MCF 10A (cell line): ENCODE measurements at regions of chr2 and their contacts with region 1.

Region 1: DNA sequence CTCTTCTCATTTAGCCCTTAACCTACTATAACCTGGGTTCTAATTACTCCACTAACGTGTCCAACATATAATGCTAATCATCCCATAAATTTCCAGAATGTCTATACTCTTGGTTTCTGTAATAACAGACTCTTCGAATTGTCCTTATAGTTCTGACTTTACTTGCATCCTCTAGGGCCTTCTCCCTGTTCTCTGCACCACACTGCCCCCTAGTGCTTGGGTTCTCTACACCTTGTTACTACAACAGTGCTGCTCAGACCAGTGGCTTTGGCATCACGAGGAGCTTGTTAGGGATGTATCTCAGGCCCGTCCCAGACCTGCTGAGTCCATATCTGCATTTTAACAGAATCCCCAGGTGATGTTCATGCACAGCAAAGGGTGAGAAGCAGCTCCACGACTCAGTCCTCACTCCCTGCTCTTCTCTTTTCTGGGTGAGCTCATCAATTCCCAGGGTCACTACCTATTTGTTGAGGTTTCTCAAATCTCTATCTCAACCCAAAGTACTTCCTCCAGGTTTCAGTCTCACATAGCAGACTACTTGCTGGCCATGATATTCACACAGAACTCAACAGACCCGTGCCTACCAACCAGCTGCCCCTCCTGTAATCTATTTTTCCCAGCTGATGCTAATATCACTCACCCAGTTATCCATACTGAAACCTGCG is 14.5 kb upstream of the DDX1 start:
- DNase-seq: peak; percentile 93
- H3K4me3 Mint-ChIP-seq: no peak overlapping the region
- H3K27ac Mint-ChIP-seq: no peak overlapping the region
- H3K4me1 Mint-ChIP-seq: no peaks in the 10 kb centered on the region
- H3K27me3 Mint-ChIP-seq: no peaks in the 10 kb centered on the region
- CTCF ChIP-seq: peak; percentile 69

Region 2: GRCh38 chr2:14428056-14428455 is 1149.1 kb before region 1 on chr2:
- CTCF ChIA-PET with region 1: interaction called, 3 read pairs
- POLR2A ChIA-PET with region 1: no interaction called
- intact Hi-C with region 1: loop called (anchors 1 kb)
- DNase-seq: peak; percentile 46
- H3K4me3 Mint-ChIP-seq: no peak overlapping the region
- H3K27ac Mint-ChIP-seq: no peak overlapping the region
- H3K4me1 Mint-ChIP-seq: no peaks in the 10 kb centered on the region
- H3K27me3 Mint-ChIP-seq: no peaks in the 10 kb centered on the region
- CTCF ChIP-seq: no peak

Region 3: DNA sequence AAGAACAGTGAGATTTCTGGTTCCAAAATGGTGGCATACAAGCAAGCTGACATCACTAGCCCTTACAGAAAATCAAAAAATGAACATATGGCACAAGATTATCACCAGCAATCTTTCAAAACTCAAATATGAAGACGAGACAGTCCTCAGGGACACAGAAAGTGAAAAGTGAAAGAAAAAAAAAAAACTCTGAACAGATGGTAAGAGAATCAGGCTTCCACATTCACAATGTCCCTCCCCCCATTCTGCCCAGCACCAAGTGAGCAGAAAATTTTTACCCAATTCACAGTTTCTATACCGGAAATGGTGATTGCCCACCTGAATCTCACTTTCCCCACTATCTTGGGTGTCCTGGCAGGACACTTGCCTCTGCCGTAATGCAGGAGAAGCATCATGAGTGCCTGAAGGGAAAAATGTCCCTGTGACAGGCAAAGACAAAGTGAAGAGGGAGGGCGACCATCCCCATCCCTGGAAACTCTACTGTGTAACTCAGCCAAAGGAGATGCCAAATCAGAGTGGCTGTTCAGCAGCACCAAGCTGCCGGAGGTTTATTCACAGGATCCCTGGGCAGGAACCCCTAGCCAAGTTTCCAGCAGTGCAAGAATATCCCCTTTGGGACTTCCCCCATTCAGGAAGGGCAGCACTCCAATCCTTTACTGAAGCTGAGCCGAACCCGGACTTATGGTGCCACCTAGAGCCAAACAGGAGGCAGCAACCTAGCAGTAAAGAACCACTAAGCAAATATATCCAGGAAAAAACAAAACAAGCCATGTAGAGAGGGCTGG is 632.4 kb before region 1 on chr2:
- CTCF ChIA-PET with region 1: interaction called, 3 read pairs
- POLR2A ChIA-PET with region 1: no interaction called
- intact Hi-C with region 1: loop called (anchors 1 kb)
- DNase-seq: peak; percentile 69
- H3K4me3 Mint-ChIP-seq: no peak overlapping the region
- H3K27ac Mint-ChIP-seq: no peak overlapping the region
- H3K4me1 Mint-ChIP-seq: no peaks in the 10 kb centered on the region
- H3K27me3 Mint-ChIP-seq: no peaks in the 10 kb centered on the region
- CTCF ChIP-seq: peak; percentile 24

Region 4: GRCh38 chr2:15560988-15561573 is 16.1 kb before region 1 on chr2 and contains the start of gene NBAS:
- CTCF ChIA-PET with region 1: interaction called, 34 read pairs
- POLR2A ChIA-PET with region 1: interaction called, 3 read pairs
- intact Hi-C with region 1: no loop called
- DNase-seq: peak; percentile 90
- H3K4me3 Mint-ChIP-seq: peak within 1 kb of the TSS; percentile 98
- H3K27ac Mint-ChIP-seq: peak within 1 kb of the TSS; percentile 94
- H3K4me1 Mint-ChIP-seq: peaks cover 24% of the 10 kb centered on the region
- H3K27me3 Mint-ChIP-seq: no peaks in the 10 kb centered on the region
- CTCF ChIP-seq: no peak
- total RNA-seq, gene NBAS: 46.4 and 55.6 TPM in 2 replicates